ENCODE measurements at regions of chr3 and their contacts with region 1.

Region 1: GRCh38 chr3:15098503-15099363 is at the start of gene RBSN:
- DNase-seq: peak; percentile 94 to 98
- ATAC-seq: peak; percentile 77 to 91 (median 82)
- H3K4me3 ChIP-seq: peak within 1 kb of the TSS; percentile 77
- H3K4me3 Mint-ChIP-seq: peak within 1 kb of the TSS; percentile 84
- H3K27ac ChIP-seq: peak within 1 kb of the TSS; percentile 96
- H3K27ac Mint-ChIP-seq: peak within 1 kb of the TSS; percentile 87 to 99
- H3K4me1 ChIP-seq: peaks cover 24% of the 10 kb centered on the region
- H3K4me1 Mint-ChIP-seq: peaks cover 18 to 27% of the 10 kb centered on the region in 2 donors
- H3K27me3 ChIP-seq: no peaks in the 10 kb centered on the region
- H3K27me3 Mint-ChIP-seq: peaks cover 0 to 10% of the 10 kb centered on the region in 2 donors
- CTCF ChIP-seq: no peak
- total RNA-seq, gene RBSN: 27.6 to 34.4 (median 29.4) TPM

Region 2: GRCh38 chr3:14431892-14432834 is 666.6 kb before region 1 on chr3:
- intact Hi-C with region 1: loop called (anchors 5 kb)
- DNase-seq: peak; percentile 91 to 96
- ATAC-seq: peak; percentile 75 to 93 (median 85)
- H3K4me3 ChIP-seq: peak overlapping the region; percentile 15
- H3K4me3 Mint-ChIP-seq: peak overlapping the region; percentile 73
- H3K27ac ChIP-seq: peak overlapping the region; percentile 97
- H3K27ac Mint-ChIP-seq: peak overlapping the region; percentile 96 to 97
- H3K4me1 ChIP-seq: peaks cover 96% of the 10 kb centered on the region
- H3K4me1 Mint-ChIP-seq: peaks cover 76 to 85% of the 10 kb centered on the region in 2 donors
- H3K27me3 ChIP-seq: no peaks in the 10 kb centered on the region
- H3K27me3 Mint-ChIP-seq: no peaks in the 10 kb centered on the region
- CTCF ChIP-seq: no peak

Region 3: DNA sequence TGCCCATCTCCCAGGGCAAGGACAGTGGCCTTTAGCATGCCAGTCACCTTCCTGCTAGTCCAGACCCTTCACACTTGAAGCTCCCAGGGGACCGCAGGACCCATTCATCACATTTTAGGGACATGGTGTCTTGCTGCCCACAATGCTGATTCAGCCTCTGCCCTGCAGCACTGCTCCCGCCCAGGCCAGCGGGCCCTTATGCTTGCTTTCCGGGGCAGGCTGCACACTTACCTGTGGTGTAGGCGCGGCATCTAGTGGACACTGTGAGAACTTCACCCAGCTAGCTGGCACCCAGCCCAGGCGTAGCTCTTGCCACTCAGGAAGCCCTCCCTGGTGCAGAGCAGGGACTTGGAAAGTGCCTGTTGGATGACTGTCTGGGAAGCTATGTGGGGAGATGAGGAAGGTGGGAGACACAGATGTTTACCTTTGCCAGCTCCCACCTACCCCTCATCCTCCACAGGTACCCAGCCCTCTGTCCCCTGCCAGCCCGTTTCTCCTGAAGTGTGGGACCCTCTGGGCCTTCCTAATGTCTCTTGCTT is 177.6 kb before region 1 on chr3:
- intact Hi-C with region 1: no loop called
- DNase-seq: peak; percentile 73 to 90
- ATAC-seq: peak; percentile 92 to 99 (median 99)
- H3K4me3 ChIP-seq: no peak overlapping the region
- H3K4me3 Mint-ChIP-seq: no peak overlapping the region
- H3K27ac ChIP-seq: no peak overlapping the region
- H3K27ac Mint-ChIP-seq: no peak overlapping the region
- H3K4me1 ChIP-seq: no peaks in the 10 kb centered on the region
- H3K4me1 Mint-ChIP-seq: peaks cover 0 to 8% of the 10 kb centered on the region in 2 donors
- H3K27me3 ChIP-seq: no peaks in the 10 kb centered on the region
- H3K27me3 Mint-ChIP-seq: no peaks in the 10 kb centered on the region
- CTCF ChIP-seq: peak; percentile 96

Region 4: GRCh38 chr3:14947886-14948555 is 150.7 kb before region 1 on chr3:
- intact Hi-C with region 1: loop called (anchors 2 kb)
- DNase-seq: peak; percentile 98
- ATAC-seq: peak; percentile 85 to 95 (median 86)
- H3K4me3 ChIP-seq: peak overlapping the region; percentile 100
- H3K4me3 Mint-ChIP-seq: peak overlapping the region; percentile 98
- H3K27ac ChIP-seq: peak overlapping the region; percentile 100
- H3K27ac Mint-ChIP-seq: peak overlapping the region; percentile 98 to 100
- H3K4me1 ChIP-seq: peaks cover 13% of the 10 kb centered on the region
- H3K4me1 Mint-ChIP-seq: peaks cover 35 to 49% of the 10 kb centered on the region in 2 donors
- H3K27me3 ChIP-seq: no peaks in the 10 kb centered on the region
- H3K27me3 Mint-ChIP-seq: no peaks in the 10 kb centered on the region
- CTCF ChIP-seq: no peak

Region 5: GRCh38 chr3:15051531-15051930 is 47.2 kb before region 1 on chr3:
- intact Hi-C with region 1: loop called (anchors 1 kb)
- DNase-seq: peak; percentile 23 to 60
- ATAC-seq: peak; percentile 58 to 68 (median 66)
- H3K4me3 ChIP-seq: no peak overlapping the region
- H3K4me3 Mint-ChIP-seq: no peak overlapping the region
- H3K27ac ChIP-seq: peak overlapping the region; percentile 18
- H3K27ac Mint-ChIP-seq: peak overlapping the region in 1 of 2 donors; percentile 33
- H3K4me1 ChIP-seq: peaks cover 28% of the 10 kb centered on the region
- H3K4me1 Mint-ChIP-seq: peaks cover 11 to 35% of the 10 kb centered on the region in 2 donors
- H3K27me3 ChIP-seq: no peaks in the 10 kb centered on the region
- H3K27me3 Mint-ChIP-seq: no peaks in the 10 kb centered on the region
- CTCF ChIP-seq: peak; percentile 69

Region 6: DNA sequence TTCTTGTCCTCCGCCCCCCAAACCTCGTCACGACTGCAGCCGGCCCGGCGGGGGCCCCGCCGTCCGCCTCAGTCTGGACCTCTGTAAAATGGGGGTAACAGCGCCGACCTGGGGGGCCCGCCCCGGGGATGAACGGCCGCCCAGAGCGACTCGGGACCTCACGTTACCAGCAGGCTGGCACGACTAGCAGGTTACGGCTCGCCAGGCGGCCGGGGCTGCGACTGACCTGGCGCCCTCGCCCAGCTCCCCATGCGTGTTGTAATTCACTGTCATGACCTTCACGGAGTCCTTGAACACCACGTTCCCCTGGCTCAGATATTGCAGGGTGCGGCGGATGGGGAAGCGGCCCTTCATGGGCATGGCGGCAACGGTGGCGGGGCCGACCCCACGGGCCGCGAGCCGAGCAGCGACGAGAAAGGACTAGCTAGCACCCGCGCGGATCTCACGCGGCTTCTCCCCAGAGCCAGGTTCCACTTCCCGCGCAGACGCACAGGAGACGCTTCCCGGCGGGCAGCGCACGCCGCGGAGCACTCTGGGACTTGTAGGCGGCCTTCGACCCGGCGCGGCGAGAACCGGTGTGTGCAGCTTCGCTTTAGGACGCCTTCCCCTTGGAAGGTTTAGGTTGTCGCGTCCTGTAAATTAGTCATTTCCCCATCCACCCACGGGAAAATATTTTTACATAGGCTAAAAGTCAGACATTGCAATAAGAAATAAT is 33.7 kb before region 1 on chr3 and contains the start of gene MRPS25:
- intact Hi-C with region 1: loop called (anchors 2 kb)
- DNase-seq: peak; percentile 81 to 94
- ATAC-seq: peak; percentile 98 to 99 (median 99)
- H3K4me3 ChIP-seq: peak within 1 kb of the TSS; percentile 70
- H3K4me3 Mint-ChIP-seq: peak within 1 kb of the TSS; percentile 94
- H3K27ac ChIP-seq: peak within 1 kb of the TSS; percentile 58
- H3K27ac Mint-ChIP-seq: peak within 1 kb of the TSS; percentile 84 to 92
- H3K4me1 ChIP-seq: peaks cover 16% of the 10 kb centered on the region
- H3K4me1 Mint-ChIP-seq: peaks cover 17 to 26% of the 10 kb centered on the region in 2 donors
- H3K27me3 ChIP-seq: no peaks in the 10 kb centered on the region
- H3K27me3 Mint-ChIP-seq: no peaks in the 10 kb centered on the region
- CTCF ChIP-seq: no peak
- total RNA-seq, gene MRPS25: 32.3 to 41.4 (median 41.4) TPM

Region 7: GRCh38 chr3:15291589-15292541 is 193.1 kb after region 1 on chr3:
- intact Hi-C with region 1: loop called (anchors 2 kb)
- DNase-seq: peak; percentile 67 to 89
- ATAC-seq: peak; percentile 67 to 88 (median 85)
- H3K4me3 ChIP-seq: peak overlapping the region; percentile 2
- H3K4me3 Mint-ChIP-seq: peak overlapping the region; percentile 84
- H3K27ac ChIP-seq: peak overlapping the region; percentile 80
- H3K27ac Mint-ChIP-seq: peak overlapping the region; percentile 87 to 97
- H3K4me1 ChIP-seq: peaks cover 92% of the 10 kb centered on the region
- H3K4me1 Mint-ChIP-seq: peaks cover 88 to 97% of the 10 kb centered on the region in 2 donors
- H3K27me3 ChIP-seq: no peaks in the 10 kb centered on the region
- H3K27me3 Mint-ChIP-seq: no peaks in the 10 kb centered on the region
- CTCF ChIP-seq: no peak